Endothelial cell of umbilical vein (primary cell): ENCODE measurements at regions of chr6 and their contacts with region 1.

Region 1: GRCh38 chr6:125749173-125749864 is at the start of gene HEY2:
- DNase-seq: peak; percentile 83
- H3K4me3 ChIP-seq: peak within 1 kb of the TSS; percentile 55 to 73 (median 71)
- H3K27ac ChIP-seq: peak within 1 kb of the TSS; percentile 23
- H3K4me1 ChIP-seq: peaks cover 25% of the 10 kb centered on the region
- H3K27me3 ChIP-seq: peaks cover 64 to 66% of the 10 kb centered on the region in 2 experiments
- CTCF ChIP-seq: no peak
- POLR2A ChIP-seq: no peak
- total RNA-seq, gene HEY2: not detected in 2 replicates

Region 2: DNA sequence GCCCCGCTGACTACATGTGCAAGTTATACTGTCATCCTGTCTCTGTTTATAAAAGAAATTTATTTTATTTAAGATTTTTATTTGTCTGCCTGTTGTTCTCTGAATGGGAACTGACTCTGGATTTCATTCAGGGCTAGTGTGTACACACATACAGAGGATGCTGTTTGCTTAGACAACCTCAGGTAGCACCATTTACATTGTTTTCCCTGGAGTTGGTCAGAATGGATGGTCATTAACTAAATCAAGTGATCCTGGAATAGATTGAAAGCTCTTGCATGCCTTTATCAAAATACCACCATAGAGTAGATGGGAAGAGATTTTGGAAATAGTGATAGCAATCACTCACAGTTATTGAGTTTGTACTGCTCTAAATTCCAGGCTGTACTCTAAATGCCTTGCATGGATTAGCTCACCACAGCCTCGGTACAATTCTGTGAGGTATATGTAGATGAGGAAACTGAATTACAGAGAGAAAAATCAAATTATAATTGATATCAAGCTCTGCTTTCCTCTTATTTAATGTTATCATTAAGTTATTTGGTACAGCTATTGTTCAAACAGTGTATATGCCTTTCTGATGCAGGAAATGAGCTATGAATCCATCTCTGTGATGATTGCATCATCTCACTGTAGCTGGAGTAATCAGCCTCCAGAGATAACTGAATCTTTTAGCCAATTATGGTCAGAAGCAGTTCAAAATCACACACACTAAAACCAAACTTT is 735.2 kb before region 1 on chr6:
- CTCF ChIA-PET with region 1: no interaction called
- POLR2A ChIA-PET with region 1: no interaction called
- dilution Hi-C with region 1: no loop called
- intact Hi-C with region 1: no loop called
- DNase-seq: peak; percentile 48
- H3K4me3 ChIP-seq: no peak overlapping the region
- H3K27ac ChIP-seq: no peak overlapping the region
- H3K4me1 ChIP-seq: peaks cover 10% of the 10 kb centered on the region
- H3K27me3 ChIP-seq: no peaks in the 10 kb centered on the region
- CTCF ChIP-seq: no peak
- POLR2A ChIP-seq: no peak

Region 3: GRCh38 chr6:125153391-125154117 is 595.8 kb before region 1 on chr6 and contains the start of gene TPD52L1:
- CTCF ChIA-PET with region 1: interaction called, 6 read pairs
- POLR2A ChIA-PET with region 1: no interaction called
- dilution Hi-C with region 1: no loop called
- intact Hi-C with region 1: loop called (anchors 5 kb)
- DNase-seq: peak; percentile 62
- H3K4me3 ChIP-seq: peak within 1 kb of the TSS; percentile 1 to 45 (median 27)
- H3K27ac ChIP-seq: no peak within 1 kb of the TSS
- H3K4me1 ChIP-seq: peaks cover 14% of the 10 kb centered on the region
- H3K27me3 ChIP-seq: peaks cover 0 to 10% of the 10 kb centered on the region in 2 experiments
- CTCF ChIP-seq: peak; percentile 82 to 89
- POLR2A ChIP-seq: no peak
- total RNA-seq, gene TPD52L1: 0.29 and 0.83 TPM in 2 replicates

Region 4: DNA sequence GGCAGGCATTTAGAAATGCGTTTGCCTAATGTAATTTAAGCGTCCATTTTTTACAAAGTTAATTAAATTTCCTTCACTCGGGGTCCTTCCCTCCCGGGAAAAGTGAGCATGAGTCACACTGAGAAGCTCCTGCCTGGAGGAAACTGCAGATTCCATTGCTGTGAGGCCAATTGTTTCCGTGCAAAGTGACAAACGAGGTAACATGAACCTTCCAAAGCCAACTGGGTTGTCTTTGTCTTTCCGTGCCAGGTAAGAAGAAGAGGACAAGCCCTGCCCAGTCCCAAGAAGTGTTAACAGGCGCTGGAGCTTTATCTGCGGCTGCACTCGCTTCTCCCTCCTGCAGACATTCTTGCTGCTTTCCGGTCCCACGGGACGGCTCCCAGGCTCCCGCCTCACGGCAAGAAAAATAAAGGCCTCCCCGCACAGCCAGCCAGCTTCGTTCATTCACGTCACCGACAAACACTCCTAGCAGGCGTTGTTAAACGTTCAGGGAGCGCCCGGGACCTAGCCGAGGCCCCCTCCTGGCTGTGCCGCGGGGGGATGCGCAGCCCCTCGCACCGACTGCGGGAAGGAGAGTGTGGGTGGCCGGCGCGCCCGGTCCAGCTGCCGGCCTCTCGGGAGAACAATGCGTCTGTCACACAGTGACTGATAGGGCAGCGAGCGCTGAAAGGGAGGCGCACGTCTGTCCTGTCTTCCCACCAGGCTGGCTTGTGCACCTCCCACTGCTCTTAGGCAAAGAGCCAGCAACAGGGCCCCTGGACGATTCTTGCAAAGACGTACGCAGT is 386.1 kb before region 1 on chr6:
- CTCF ChIA-PET with region 1: interaction called, 5 read pairs
- POLR2A ChIA-PET with region 1: no interaction called
- dilution Hi-C with region 1: no loop called
- intact Hi-C with region 1: loop called (anchors 2 kb)
- DNase-seq: peak; percentile 64
- H3K4me3 ChIP-seq: peak overlapping the region; percentile 31 to 63 (median 42)
- H3K27ac ChIP-seq: peak overlapping the region; percentile 58
- H3K4me1 ChIP-seq: peaks cover 16% of the 10 kb centered on the region
- H3K27me3 ChIP-seq: peaks cover 15 to 27% of the 10 kb centered on the region in 2 experiments
- CTCF ChIP-seq: no peak
- POLR2A ChIP-seq: no peak

Region 5: DNA sequence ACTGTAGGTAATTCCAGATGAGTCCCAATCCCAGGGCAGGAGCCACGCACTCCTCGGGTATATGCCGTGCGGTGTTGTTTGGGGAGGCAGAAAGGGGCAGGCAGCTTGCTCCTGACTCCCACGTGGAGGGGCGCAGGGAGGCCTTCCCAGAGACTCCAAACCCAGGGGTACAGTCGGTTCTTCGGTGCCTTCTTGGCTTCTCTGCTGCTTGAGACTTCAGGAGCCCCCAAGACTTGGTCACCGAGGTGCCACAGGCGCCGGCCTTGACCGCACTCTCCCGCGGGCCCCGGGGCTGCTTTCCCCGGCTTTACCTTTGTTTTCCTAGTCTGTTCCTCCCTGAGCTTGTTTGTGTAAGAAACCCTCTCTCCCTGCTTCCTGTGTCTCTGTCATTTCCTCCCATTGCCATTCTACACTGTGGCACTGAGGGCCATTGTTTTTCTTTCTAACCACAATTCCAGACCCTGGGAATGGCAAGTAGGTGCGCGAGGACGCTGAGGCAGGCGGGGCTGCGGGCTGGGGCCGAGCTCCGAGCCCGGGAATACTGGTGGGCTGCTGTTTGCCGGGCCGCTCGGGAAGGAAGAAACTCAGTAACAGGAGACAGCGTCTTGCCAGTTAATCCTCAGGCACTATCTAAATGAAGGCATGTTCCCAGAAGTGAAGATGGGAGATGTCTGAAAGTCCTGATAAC is 215.5 kb before region 1 on chr6:
- CTCF ChIA-PET with region 1: no interaction called
- POLR2A ChIA-PET with region 1: no interaction called
- dilution Hi-C with region 1: no loop called
- intact Hi-C with region 1: loop called (anchors 2 kb)
- DNase-seq: peak; percentile 8
- H3K4me3 ChIP-seq: peak overlapping the region in 2 of 3 experiments; percentile 27 to 44
- H3K27ac ChIP-seq: peak overlapping the region; percentile 28
- H3K4me1 ChIP-seq: peaks cover 14% of the 10 kb centered on the region
- H3K27me3 ChIP-seq: peaks cover 4 to 29% of the 10 kb centered on the region in 2 experiments
- CTCF ChIP-seq: no peak
- POLR2A ChIP-seq: no peak

Region 6: DNA sequence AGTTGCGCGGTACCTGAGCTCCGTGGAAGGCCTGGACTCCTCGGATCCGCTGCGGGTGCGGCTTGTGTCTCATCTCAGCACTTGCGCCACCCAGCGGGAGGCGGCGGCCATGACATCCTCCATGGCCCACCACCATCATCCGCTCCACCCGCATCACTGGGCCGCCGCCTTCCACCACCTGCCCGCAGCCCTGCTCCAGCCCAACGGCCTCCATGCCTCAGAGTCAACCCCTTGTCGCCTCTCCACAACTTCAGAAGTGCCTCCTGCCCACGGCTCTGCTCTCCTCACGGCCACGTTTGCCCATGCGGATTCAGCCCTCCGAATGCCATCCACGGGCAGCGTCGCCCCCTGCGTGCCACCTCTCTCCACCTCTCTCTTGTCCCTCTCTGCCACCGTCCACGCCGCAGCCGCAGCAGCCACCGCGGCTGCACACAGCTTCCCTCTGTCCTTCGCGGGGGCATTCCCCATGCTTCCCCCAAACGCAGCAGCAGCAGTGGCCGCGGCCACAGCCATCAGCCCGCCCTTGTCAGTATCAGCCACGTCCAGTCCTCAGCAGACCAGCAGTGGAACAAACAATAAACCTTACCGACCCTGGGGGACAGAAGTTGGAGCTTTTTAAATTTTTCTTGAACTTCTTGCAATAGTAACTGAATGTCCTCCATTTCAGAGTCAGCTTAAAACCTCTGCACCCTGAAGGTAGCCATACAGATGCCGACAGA is 10.0 kb after region 1 on chr6:
- CTCF ChIA-PET with region 1: interaction called, 22 read pairs
- POLR2A ChIA-PET with region 1: no interaction called
- dilution Hi-C with region 1: no loop called
- intact Hi-C with region 1: no loop called
- DNase-seq: no peak
- H3K4me3 ChIP-seq: no peak overlapping the region
- H3K27ac ChIP-seq: no peak overlapping the region
- H3K4me1 ChIP-seq: no peaks in the 10 kb centered on the region
- H3K27me3 ChIP-seq: peaks cover 3 to 18% of the 10 kb centered on the region in 2 experiments
- CTCF ChIP-seq: peak; percentile 38 to 39
- POLR2A ChIP-seq: no peak